PC-3 (cell line): ENCODE measurements at regions of chr5 and their contacts with region 1.

Region 1: DNA sequence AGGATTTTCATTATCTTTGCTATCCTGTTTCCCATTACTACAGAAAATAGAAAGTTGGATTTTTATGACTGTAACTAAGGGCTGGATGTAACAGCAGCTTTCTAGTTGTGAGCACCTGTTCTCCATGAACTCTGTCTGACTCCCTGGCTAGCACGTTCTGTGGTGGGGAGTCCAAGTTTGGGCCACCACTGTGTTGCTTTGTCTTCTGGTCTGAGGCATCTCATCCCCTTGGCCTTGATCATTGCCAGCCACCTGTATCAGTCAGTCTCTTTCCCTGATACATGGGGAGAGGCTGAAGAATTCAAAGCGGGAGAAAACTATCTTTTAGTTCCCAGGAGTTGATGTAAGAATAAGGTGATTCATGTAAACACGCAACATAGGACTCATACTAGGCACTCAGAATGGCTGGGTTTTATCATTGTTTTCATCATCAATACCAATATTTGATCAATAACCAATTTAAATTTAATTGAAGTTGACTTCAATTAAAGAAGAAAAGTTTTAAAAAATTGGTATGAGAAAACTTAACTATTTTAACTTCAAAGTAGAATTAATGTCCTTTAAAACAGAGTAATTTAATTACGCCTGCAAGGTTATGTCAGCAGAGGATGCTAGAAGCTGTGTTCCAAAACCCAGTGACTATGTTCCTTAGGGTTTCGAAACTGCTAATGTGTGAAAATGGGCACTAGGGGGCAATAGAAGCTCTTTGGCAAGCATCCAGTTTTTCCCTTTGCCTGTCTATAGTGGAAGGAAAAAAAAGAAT is 33.6 kb downstream of the WDR70 start:
- DNase-seq: peak; percentile 93
- ATAC-seq: peak; percentile 96
- H3K4me3 ChIP-seq: no peak overlapping the region
- H3K27ac ChIP-seq: no peak overlapping the region
- H3K4me1 ChIP-seq: no peaks in the 10 kb centered on the region
- H3K27me3 ChIP-seq: no peaks in the 10 kb centered on the region
- CTCF ChIP-seq: peak; percentile 98

Region 2: DNA sequence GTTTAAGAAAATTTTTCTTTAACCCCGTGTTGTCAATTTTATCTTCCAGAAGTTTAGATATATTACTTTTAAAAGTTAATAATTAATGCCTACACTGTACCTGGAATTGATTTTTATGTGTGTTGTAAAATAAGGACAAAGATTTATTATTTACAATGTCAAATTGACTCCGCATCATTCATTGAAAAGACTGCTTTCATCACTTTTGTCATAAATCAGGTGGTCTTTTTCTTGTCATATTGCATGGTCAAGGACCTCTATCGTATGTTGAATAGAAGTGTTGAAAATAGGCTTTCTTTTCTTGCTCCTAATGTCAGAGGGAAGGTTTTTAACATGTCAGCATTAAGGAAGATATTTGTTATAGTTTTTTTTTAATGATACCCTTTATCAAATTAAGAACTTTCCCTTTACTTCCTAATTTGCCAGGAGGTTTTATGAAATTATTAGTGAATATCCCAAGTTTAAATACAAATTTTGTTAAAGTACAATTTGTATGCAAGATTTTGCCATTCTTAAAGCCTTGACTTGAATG is 59.0 kb after region 1 on chr5:
- CTCF ChIA-PET with region 1: no interaction called
- POLR2A ChIA-PET with region 1: no interaction called
- intact Hi-C with region 1: no loop called
- DNase-seq: no peak
- ATAC-seq: no peak
- H3K4me3 ChIP-seq: no peak overlapping the region
- H3K27ac ChIP-seq: no peak overlapping the region
- H3K4me1 ChIP-seq: no peaks in the 10 kb centered on the region
- H3K27me3 ChIP-seq: no peaks in the 10 kb centered on the region
- CTCF ChIP-seq: no peak

Region 3: DNA sequence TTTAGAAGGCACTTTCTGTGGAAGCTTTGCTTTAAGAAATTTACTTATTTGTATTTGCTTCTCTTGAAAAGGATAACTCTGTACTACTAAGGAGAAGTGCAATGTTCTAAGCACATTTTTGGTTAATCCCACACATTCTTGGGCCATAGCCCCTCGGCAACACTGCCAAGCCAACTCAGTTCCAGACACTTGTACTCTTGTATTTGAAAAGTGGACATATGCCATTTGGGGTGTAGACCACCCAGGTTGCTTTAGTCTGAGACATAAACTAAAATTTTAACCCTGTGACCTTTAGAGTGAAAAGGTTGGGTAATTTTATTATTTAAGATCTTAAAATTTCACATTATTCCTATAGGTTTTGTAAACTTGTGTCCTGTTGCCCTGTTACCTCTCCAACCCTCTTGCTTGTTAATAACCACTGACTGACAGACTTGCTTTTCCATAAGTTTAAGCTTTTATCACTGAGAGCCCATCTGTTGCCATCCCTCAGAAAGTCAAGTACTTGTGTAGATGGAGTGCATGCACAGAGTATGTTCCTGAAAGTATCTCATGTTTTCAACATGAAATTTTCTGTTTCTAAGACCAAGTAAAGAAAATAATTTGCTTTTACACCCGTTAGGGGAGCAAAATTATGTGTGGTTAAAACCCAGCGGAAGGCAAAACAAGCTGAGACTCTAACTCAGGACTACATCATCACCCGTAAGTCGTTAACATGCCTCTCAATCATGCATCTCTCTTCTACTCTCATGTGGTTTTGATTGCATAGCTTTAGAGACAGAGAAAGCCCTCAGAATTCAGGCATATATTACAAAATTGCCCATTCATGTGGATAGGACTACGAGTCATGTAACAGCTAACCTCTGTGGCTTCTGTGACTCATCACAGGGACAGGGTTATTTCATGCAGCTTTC is 309.8 kb after region 1 on chr5:
- CTCF ChIA-PET with region 1: no interaction called
- POLR2A ChIA-PET with region 1: no interaction called
- intact Hi-C with region 1: loop called (anchors 5 kb)
- DNase-seq: peak; percentile 96
- ATAC-seq: peak; percentile 92
- H3K4me3 ChIP-seq: no peak overlapping the region
- H3K27ac ChIP-seq: peak overlapping the region; percentile 53
- H3K4me1 ChIP-seq: peaks cover 41% of the 10 kb centered on the region
- H3K27me3 ChIP-seq: no peaks in the 10 kb centered on the region
- CTCF ChIP-seq: no peak

Region 4: DNA sequence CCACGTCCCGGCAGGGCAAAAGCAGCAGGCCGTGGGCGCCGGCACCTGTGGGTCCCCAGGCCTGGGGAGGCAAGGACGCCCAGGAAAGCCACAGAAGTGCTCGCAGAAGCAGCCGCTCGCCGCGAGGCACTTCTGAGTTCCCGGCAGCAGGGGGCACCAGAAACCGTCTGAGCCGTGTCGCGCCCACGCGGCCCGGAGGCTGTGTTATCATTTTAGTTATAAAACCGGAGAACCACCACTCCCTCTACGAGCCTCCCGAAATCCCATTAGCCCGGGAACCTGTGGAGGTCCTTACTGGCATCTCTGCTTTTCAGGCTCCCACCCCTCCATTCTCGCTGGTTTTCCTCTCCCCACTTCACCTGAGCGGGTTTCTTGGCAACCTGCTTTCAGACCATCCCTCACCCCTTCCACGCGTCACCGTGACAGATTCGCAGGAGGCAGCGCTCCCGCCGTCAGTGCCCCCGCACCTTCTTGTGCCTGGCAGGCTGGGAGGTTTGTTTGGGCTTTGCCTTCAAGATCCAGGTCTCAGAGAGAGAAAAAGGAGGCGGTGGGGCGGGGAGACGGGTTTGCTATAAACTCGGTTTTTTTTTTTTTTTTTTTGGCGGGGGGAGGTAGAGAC is 424.8 kb after region 1 on chr5:
- CTCF ChIA-PET with region 1: no interaction called
- POLR2A ChIA-PET with region 1: no interaction called
- intact Hi-C with region 1: loop called (anchors 1 kb)
- DNase-seq: peak; percentile 84
- ATAC-seq: peak; percentile 58
- H3K4me3 ChIP-seq: peak overlapping the region; percentile 70
- H3K27ac ChIP-seq: no peak overlapping the region
- H3K4me1 ChIP-seq: peaks cover 19% of the 10 kb centered on the region
- H3K27me3 ChIP-seq: peaks cover 85% of the 10 kb centered on the region
- CTCF ChIP-seq: peak; percentile 89

Region 5: DNA sequence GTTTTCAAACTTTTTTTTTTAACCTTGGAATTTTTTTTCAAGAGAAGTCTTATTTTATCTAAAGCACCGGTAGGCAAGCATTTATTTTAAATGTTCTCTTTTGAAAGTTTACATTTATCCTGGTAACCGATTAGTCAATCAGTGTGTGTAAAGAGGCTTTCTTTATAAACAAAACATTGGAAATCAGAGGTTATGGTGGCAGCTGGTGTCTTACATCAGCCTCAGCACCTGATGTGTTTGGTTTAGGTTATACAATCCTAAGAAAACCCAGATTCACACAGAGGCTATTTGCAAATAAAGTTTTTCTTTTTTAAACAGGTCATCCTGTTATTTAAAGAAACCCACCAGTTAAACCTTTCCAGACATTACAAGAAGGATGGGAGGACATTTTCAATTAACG is 600.4 kb after region 1 on chr5:
- CTCF ChIA-PET with region 1: no interaction called
- POLR2A ChIA-PET with region 1: no interaction called
- intact Hi-C with region 1: no loop called
- DNase-seq: no peak
- ATAC-seq: no peak
- H3K4me3 ChIP-seq: no peak overlapping the region
- H3K27ac ChIP-seq: no peak overlapping the region
- H3K4me1 ChIP-seq: no peaks in the 10 kb centered on the region
- H3K27me3 ChIP-seq: peaks cover 99% of the 10 kb centered on the region
- CTCF ChIP-seq: no peak

Region 6: DNA sequence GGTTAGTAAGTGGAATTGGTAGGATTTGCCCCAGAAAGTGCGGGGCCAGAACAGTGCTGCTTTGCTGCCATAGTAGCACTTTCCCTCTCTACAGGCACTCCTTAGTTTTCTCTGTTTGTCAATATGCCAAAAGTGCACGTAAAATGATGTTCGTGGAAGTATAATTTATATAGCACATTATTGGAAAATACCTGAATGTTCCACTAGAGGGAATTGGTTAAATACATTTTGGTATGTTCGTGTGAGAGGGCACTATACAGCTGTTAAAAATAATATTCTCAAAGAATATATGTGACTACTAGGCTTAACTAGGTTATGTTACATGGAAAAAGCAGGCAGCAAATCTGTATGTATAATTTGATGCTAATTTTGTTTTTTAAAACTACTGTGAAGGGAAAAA is 611.1 kb after region 1 on chr5:
- CTCF ChIA-PET with region 1: no interaction called
- POLR2A ChIA-PET with region 1: no interaction called
- intact Hi-C with region 1: loop called (anchors 10 kb)
- DNase-seq: peak; percentile 60
- ATAC-seq: peak; percentile 51
- H3K4me3 ChIP-seq: no peak overlapping the region
- H3K27ac ChIP-seq: no peak overlapping the region
- H3K4me1 ChIP-seq: no peaks in the 10 kb centered on the region
- H3K27me3 ChIP-seq: peaks cover 65% of the 10 kb centered on the region
- CTCF ChIP-seq: peak; percentile 70